CD4-positive, alpha-beta T cell (primary cell): ENCODE measurements at regions of chr7 and their contacts with region 1.

Region 1: GRCh38 chr7:88111136-88111743 is 108.6 kb downstream of the SRI start:
- DNase-seq: peak in 3 of 14 experiments; percentile 28 to 41 (median 36)
- ATAC-seq: no peak
- H3K4me3 ChIP-seq: no peak overlapping the region
- H3K4me3 Mint-ChIP-seq: no peak overlapping the region
- H3K27ac ChIP-seq: no peak overlapping the region
- H3K27ac Mint-ChIP-seq: no peak overlapping the region
- H3K4me1 ChIP-seq: no peaks in the 10 kb centered on the region
- H3K4me1 Mint-ChIP-seq: no peaks in the 10 kb centered on the region
- H3K27me3 ChIP-seq: no peaks in the 10 kb centered on the region
- H3K27me3 Mint-ChIP-seq: no peaks in the 10 kb centered on the region
- CTCF ChIP-seq: peak; percentile 34

Region 2: GRCh38 chr7:87312215-87312865 is 798.9 kb before region 1 on chr7:
- CTCF ChIA-PET with region 1: no interaction called
- POLR2A ChIA-PET with region 1: no interaction called
- intact Hi-C with region 1: loop called in 1 of 2 experiments (anchors 10 kb)
- DNase-seq: peak; percentile 37 to 82 (median 54)
- ATAC-seq: peak; percentile 92
- H3K4me3 ChIP-seq: no peak overlapping the region
- H3K4me3 Mint-ChIP-seq: no peak overlapping the region
- H3K27ac ChIP-seq: no peak overlapping the region
- H3K27ac Mint-ChIP-seq: no peak overlapping the region
- H3K4me1 ChIP-seq: peaks cover 5% of the 10 kb centered on the region
- H3K4me1 Mint-ChIP-seq: peaks cover 8% of the 10 kb centered on the region
- H3K27me3 ChIP-seq: no peaks in the 10 kb centered on the region
- H3K27me3 Mint-ChIP-seq: no peaks in the 10 kb centered on the region
- CTCF ChIP-seq: peak; percentile 95

Region 3: GRCh38 chr7:87506246-87507180 is 604.7 kb before region 1 on chr7:
- CTCF ChIA-PET with region 1: no interaction called
- POLR2A ChIA-PET with region 1: no interaction called
- intact Hi-C with region 1: loop called in 1 of 2 experiments (anchors 10 kb)
- DNase-seq: peak in 3 of 14 experiments; percentile 12 to 18 (median 15)
- ATAC-seq: no peak
- H3K4me3 ChIP-seq: no peak overlapping the region
- H3K4me3 Mint-ChIP-seq: no peak overlapping the region
- H3K27ac ChIP-seq: no peak overlapping the region
- H3K27ac Mint-ChIP-seq: no peak overlapping the region
- H3K4me1 ChIP-seq: no peaks in the 10 kb centered on the region
- H3K4me1 Mint-ChIP-seq: no peaks in the 10 kb centered on the region
- H3K27me3 ChIP-seq: no peaks in the 10 kb centered on the region
- H3K27me3 Mint-ChIP-seq: no peaks in the 10 kb centered on the region
- CTCF ChIP-seq: peak; percentile 16

Region 4: GRCh38 chr7:87797798-87798403 is 313.3 kb before region 1 on chr7:
- CTCF ChIA-PET with region 1: no interaction called
- POLR2A ChIA-PET with region 1: no interaction called
- intact Hi-C with region 1: loop called (anchors 2 kb)
- DNase-seq: peak in 3 of 14 experiments; percentile 60 to 69 (median 65)
- ATAC-seq: peak; percentile 74
- H3K4me3 ChIP-seq: no peak overlapping the region
- H3K4me3 Mint-ChIP-seq: no peak overlapping the region
- H3K27ac ChIP-seq: no peak overlapping the region
- H3K27ac Mint-ChIP-seq: no peak overlapping the region
- H3K4me1 ChIP-seq: no peaks in the 10 kb centered on the region
- H3K4me1 Mint-ChIP-seq: no peaks in the 10 kb centered on the region
- H3K27me3 ChIP-seq: no peaks in the 10 kb centered on the region
- H3K27me3 Mint-ChIP-seq: peaks cover 13% of the 10 kb centered on the region
- CTCF ChIP-seq: peak; percentile 70

Region 5: DNA sequence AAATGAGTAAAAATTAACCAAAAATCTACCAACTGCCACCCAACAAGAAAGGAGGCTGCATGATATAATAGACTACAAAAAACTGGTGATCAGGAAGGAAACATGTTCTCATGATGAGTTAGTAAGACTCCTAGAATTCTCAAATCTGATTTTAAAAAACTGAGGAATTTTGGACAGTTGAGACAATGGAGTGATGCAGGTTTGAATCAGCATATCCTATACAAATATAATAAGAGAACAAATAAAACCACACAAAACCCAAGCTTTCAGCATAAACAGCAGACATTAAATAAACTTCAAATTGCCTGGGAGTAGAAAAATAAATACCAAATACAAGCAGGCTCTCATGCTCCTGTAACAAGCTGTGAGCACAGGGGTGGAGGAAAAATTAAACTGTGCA is 292.9 kb before region 1 on chr7:
- CTCF ChIA-PET with region 1: no interaction called
- POLR2A ChIA-PET with region 1: no interaction called
- intact Hi-C with region 1: no loop called
- DNase-seq: no peak
- ATAC-seq: no peak
- H3K4me3 ChIP-seq: no peak overlapping the region
- H3K4me3 Mint-ChIP-seq: no peak overlapping the region
- H3K27ac ChIP-seq: no peak overlapping the region
- H3K27ac Mint-ChIP-seq: no peak overlapping the region
- H3K4me1 ChIP-seq: no peaks in the 10 kb centered on the region
- H3K4me1 Mint-ChIP-seq: no peaks in the 10 kb centered on the region
- H3K27me3 ChIP-seq: no peaks in the 10 kb centered on the region
- H3K27me3 Mint-ChIP-seq: peaks cover 5% of the 10 kb centered on the region
- CTCF ChIP-seq: no peak